ENCODE measurements at regions of chr15 and their contacts with region 1.

Region 1: GRCh38 chr15:61186905-61187741 is 42.0 kb downstream of the RORA start:
- DNase-seq: no peak
- H3K4me3 ChIP-seq: peak overlapping the region in 2 of 3 donors; percentile 13 to 35
- H3K27ac ChIP-seq: no peak overlapping the region
- H3K4me1 ChIP-seq: peaks cover 0 to 9% of the 10 kb centered on the region in 2 donors
- H3K27me3 ChIP-seq: no peaks in the 10 kb centered on the region
- CTCF ChIP-seq: no peak
- POLR2A ChIP-seq: no peak

Region 2: DNA sequence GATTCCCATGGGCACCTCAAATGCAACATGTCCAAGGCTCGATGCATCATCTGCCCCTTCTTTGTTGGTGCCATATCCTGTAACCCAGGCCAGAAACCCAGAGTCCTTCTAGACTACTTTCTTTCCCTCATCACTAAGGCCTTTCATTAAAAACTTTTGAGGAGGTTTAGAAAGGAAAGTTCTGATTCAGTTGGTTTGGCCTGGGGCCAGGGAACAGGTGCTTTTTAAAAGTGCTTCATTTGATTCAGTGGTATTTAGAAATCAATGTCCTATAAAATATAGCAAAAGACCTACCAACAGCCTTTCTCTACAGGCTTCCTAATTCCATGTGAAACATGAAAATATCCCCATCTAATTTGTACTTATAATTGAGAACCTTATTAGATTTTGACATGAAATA is 383.9 kb after region 1 on chr15:
- intact Hi-C with region 1: loop called (anchors 5 kb)
- DNase-seq: no peak
- H3K4me3 ChIP-seq: no peak overlapping the region
- H3K27ac ChIP-seq: no peak overlapping the region
- H3K4me1 ChIP-seq: no peaks in the 10 kb centered on the region
- H3K27me3 ChIP-seq: no peaks in the 10 kb centered on the region
- CTCF ChIP-seq: no peak
- POLR2A ChIP-seq: no peak